Left cardiac atrium (tissue), 4 donors: ENCODE measurements at regions of chr17 and their contacts with region 1.

Region 1: GRCh38 chr17:64145757-64146417 is 15.9 kb upstream of the ERN1 start:
- DNase-seq: peak; percentile 98
- ATAC-seq: peak; percentile 97

Region 2: GRCh38 chr17:63919311-63919723 is 226.6 kb before region 1 on chr17:
- intact Hi-C with region 1: no loop called
- DNase-seq: peak; percentile 44
- ATAC-seq: peak; percentile 89 to 92

Region 3: DNA sequence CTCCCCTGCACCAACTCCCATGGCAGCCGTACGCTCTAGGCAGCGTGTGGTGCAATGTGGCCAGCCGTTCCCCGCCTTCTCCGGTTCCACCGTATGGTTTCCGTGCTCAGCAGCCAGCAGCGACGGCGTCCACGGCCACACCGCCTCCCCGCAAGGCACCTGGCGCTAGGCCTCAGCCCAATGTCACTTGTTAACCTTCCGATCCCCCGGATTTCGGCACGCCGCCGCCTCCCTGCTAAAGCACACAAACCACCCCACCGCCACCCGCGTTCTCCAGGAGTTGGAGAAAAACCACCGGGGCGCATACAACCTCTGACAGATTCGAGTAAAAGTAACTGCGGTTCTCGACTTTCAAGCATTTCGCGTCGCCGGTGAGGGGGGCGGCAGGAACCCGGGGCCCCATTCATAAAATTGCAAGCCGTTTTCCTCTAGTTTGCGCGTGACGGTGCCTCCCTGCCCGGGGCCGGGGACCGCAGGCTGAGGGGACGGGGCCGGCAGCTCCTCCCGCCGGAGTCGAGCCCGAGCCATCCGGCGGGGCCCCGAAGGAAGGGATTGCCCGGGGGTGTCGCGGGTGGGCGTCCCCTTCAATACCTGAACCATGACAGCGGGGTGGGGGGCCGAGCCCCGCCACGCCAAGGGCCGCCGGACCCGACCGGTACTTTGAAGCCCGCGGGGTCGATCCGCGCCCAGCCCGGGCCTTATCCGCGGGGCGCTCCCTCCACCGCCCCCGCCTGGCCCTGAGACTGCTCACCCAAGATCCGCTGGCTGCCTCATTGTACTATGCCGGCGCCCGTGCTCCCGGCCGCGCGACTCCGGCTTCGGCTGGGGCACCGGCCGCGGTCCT is 116.8 kb after region 1 on chr17 and contains the start of gene TEX2:
- intact Hi-C with region 1: loop called (anchors 5 to 10 kb)
- DNase-seq: peak; percentile 64
- ATAC-seq: peak; percentile 53 to 55
- total RNA-seq, gene TEX2: 40.7 to 54.8 TPM